ENCODE measurements at regions of chr2 and their contacts with region 1.

Region 1: DNA sequence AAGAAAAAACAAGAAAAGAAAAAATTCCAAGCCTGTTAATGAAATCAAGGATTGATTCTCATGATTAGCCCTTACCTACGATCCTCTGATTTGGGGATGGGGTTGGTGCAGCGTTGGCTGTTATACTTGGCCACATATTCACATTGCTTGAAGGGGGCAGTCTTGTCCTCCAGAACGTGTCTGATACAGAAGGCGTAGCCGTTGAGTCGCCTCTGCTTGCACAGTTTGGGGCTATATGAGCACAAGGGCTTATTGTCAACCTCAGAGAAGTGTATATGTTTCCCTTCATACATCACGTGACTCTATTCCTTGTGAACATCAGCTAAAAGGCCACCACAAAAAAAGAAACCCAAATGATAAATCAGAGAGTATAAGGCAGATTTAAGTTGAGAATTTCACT is 23.2 kb downstream of the INO80D start:
- DNase-seq: no peak
- H3K4me3 ChIP-seq: no peak overlapping the region
- H3K27ac ChIP-seq: no peak overlapping the region
- H3K27me3 ChIP-seq: no peaks in the 10 kb centered on the region
- CTCF ChIP-seq: no peak

Region 2: GRCh38 chr2:206031162-206031784 is 31.5 kb before region 1 on chr2:
- CTCF ChIA-PET with region 1: no interaction called
- POLR2A ChIA-PET with region 1: interaction called, 13 read pairs
- DNase-seq: no peak
- H3K4me3 ChIP-seq: no peak overlapping the region
- H3K27ac ChIP-seq: no peak overlapping the region
- H3K27me3 ChIP-seq: no peaks in the 10 kb centered on the region
- CTCF ChIP-seq: no peak

Region 3: GRCh38 chr2:206045251-206045650 is 17.5 kb before region 1 on chr2:
- CTCF ChIA-PET with region 1: no interaction called
- POLR2A ChIA-PET with region 1: interaction called, 21 read pairs
- DNase-seq: no peak
- H3K4me3 ChIP-seq: no peak overlapping the region
- H3K27ac ChIP-seq: no peak overlapping the region
- H3K27me3 ChIP-seq: no peaks in the 10 kb centered on the region
- CTCF ChIP-seq: no peak